Posterior cingulate gyrus (tissue), 11 donors: ENCODE measurements at regions of chr16 and their contacts with region 1.

Region 1: DNA sequence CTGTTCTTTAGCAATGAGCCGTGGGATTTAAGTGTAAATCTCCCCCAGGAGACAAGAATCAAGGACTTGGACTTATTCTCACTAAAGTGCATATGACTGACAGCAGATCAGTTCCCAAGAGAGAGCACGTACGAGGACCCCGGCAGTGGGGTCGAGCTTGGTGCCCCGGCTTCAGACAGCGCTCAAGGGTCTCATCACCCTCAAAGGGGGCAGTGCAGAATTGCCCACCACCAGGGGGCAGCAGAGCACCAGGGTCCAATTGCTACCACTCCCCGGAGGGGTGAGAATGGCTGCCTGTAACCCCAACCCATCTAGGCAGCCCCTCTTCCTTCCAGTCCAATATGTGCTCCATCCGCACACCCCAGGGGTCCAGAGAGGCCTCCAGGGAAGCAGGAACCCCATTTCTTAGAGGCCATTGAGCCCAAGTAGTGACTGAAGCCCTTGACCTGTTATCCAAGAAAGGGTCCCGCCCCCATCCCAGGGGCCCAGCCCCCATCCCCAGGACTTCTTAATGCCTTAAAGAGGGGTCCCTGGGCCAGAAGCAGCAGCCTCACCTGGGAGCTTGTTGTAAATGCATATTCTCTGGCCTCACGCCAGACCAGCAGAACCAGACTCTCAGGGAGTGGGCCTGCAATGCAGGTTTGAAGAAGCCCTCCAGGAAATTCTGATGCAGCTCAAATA is 86.1 kb downstream of the ZDHHC7 start:
- DNase-seq: peak in 7 of 10 donors; percentile 37 to 88 (median 72)

Region 2: GRCh38 chr16:84062734-84063640 is 862.2 kb before region 1 on chr16:
- intact Hi-C with region 1: no loop called
- DNase-seq: peak; percentile 68 to 97 (median 85)

Region 3: DNA sequence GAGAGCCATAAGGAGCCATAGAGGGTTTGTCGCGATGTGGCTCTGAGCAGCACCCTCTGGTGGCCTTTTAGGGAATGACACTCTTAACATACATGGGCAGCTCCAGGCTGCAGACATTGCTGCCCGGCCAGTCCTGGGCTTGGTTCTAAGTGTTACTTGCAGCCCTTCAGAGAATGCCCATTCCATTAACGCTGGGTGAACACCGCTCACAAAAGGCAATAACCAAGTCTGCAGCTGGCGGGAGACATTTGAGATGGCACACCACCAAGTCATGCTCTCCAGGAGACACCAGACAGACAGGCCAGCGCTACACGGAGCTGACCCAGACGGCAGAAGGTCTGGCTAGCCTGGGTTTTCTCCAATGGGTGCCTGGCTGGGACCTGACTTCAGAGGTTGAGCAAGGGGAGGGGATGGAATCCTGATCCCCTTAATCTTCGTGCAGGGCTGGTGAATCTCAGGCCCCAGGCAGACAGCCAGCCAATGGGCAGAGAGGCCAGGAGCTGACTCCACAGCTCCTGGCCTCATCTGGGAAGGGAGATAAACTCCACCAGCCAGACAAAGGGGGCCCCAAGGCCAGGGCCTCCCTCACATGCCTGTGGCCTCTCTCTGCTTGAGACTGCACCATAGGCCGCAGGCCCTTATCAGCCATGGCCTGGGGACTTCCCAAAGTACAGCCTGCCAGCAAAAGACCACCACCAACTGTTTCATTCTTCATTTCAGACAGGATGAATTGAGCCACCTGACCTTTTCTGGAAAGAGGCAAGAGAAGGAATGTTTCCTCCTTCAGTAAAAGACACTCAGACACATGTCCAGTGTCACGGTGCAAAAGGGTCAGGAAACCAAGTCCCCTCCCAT is 27.3 kb after region 1 on chr16:
- intact Hi-C with region 1: loop called (anchors 2 kb)
- DNase-seq: peak in 9 of 10 donors; percentile 50 to 94 (median 76)

Region 4: DNA sequence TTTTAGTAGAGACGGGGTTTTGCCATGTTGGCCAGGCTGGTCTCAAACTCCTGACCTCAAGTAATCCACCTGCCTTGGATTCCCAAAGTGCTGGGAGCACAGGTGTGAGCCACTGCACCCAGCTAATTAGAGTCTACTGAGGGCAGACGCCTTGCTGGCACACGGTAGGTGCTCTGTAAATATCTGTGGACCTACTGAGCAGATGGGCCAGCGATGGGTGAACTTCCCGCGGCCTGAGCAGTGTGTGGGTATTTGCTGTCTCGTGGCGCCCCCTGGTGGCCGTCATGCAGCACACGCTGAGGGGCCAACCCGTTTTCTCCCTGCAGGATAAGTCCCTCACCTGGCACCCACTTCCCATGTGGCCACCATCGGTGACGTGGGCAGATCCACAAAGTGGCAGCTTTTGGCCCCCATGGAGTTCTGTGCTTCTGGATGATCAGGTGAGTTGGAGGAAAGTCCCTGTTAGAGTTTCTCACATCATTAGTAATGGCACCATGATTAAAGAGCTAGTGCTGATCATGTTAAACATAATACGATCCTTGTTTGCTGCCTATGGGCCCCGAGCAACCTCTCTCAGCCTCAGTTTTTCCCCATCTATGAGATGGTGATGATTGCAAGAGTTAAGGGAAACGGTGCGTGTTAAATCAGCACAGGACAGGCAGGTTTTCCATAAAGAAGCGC is 45.4 kb after region 1 on chr16:
- intact Hi-C with region 1: loop called (anchors 1 kb)
- DNase-seq: peak; percentile 63 to 97 (median 82)